ENCODE measurements at regions of chr2 and their contacts with region 1.

Region 1: GRCh38 chr2:10122386-10123280 is at the start of gene RRM2:
- DNase-seq: peak; percentile 98
- ATAC-seq: peak; percentile 81
- H3K4me3 Mint-ChIP-seq: peak within 1 kb of the TSS; percentile 98
- H3K27ac Mint-ChIP-seq: peak within 1 kb of the TSS; percentile 99
- H3K4me1 Mint-ChIP-seq: peaks cover 55% of the 10 kb centered on the region
- H3K27me3 Mint-ChIP-seq: no peaks in the 10 kb centered on the region
- total RNA-seq, gene RRM2: 571 to 604 TPM

Region 2: DNA sequence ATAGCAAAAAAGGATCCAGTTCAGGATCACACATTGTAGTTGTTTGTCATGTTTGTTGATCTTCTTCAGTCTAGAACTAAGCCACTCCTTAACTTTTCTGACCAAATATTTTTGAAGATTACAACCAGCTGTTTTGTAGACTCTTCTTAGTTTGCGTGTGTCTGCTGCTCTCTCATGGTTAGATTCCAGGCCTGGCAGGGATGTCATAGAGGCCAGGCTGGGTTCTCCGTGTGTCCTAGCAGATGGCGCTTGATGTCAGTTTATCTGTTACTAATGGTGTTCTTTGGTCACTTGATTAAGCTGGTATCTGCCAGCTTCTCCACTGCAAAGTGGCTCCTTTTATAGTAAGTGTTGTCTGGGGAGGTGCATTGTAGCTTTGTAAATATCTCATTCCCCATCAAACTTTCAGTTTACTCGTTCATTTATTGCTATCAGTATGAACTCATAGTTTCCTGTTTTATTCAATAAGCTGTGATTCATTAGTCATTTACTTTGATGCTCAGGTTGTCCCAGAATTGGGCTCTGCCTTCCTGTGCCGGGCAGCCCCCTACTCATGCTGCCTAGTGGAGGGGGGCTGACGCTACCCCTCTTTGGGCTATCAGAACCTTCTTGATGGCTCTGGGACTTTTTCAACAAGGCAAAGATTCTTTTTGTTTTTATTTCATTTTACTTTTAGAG is 129.0 kb before region 1 on chr2:
- CTCF ChIA-PET with region 1: no interaction called
- POLR2A ChIA-PET with region 1: no interaction called
- DNase-seq: no peak
- ATAC-seq: no peak
- H3K4me3 Mint-ChIP-seq: no peak overlapping the region
- H3K27ac Mint-ChIP-seq: no peak overlapping the region
- H3K4me1 Mint-ChIP-seq: no peaks in the 10 kb centered on the region
- H3K27me3 Mint-ChIP-seq: no peaks in the 10 kb centered on the region

Region 3: GRCh38 chr2:10097352-10098148 is 25.1 kb before region 1 on chr2:
- CTCF ChIA-PET with region 1: interaction called, 24 read pairs
- POLR2A ChIA-PET with region 1: interaction called, 4 read pairs
- DNase-seq: peak; percentile 44
- ATAC-seq: peak; percentile 91
- H3K4me3 Mint-ChIP-seq: no peak overlapping the region
- H3K27ac Mint-ChIP-seq: no peak overlapping the region
- H3K4me1 Mint-ChIP-seq: peaks cover 4% of the 10 kb centered on the region
- H3K27me3 Mint-ChIP-seq: peaks cover 40% of the 10 kb centered on the region

Region 4: DNA sequence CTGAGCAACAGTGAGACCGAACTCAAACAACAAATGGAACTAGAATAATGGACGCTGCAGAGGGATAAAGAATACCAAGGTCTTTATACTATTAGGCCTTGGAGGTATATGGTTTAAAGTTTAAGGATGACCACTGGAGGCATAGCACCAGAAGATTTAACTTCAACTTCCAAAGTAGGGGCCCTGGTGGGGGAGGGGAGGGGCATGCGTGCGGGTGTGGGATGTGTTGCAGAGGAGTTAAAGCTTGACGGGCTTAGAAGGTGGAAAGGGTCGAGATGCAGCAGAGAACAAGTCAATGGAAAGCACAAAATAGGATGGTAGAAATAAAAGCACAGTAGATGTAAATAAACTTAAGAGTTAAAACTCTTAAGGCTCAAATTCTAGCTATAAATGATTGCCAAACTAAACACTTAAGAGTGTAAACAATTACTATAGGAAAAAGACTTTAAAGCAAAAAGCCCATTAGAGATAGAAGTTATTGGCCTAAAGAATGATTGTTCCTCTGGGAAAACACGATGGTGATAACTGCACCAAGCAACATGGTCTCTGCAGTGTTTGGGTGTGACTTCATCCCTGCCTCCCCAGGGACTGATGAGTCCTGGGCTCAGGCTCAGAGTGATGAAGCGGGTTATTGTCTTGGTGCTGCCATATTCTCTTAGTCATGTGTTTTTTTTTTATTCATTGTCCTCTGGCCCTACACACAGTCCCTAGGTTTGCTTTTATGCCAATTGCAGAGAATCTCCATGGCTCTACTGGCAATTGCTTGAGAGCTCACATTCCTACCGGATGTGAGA is 12.9 kb after region 1 on chr2:
- CTCF ChIA-PET with region 1: interaction called, 12 read pairs
- POLR2A ChIA-PET with region 1: interaction called, 13 read pairs
- DNase-seq: no peak
- ATAC-seq: no peak
- H3K4me3 Mint-ChIP-seq: no peak overlapping the region
- H3K27ac Mint-ChIP-seq: peak overlapping the region; percentile 67
- H3K4me1 Mint-ChIP-seq: peaks cover 42% of the 10 kb centered on the region
- H3K27me3 Mint-ChIP-seq: no peaks in the 10 kb centered on the region

Region 5: GRCh38 chr2:10141736-10142642 is 19.4 kb after region 1 on chr2:
- CTCF ChIA-PET with region 1: interaction called, 12 read pairs
- POLR2A ChIA-PET with region 1: interaction called, 6 read pairs
- DNase-seq: peak; percentile 75
- ATAC-seq: peak; percentile 59
- H3K4me3 Mint-ChIP-seq: peak overlapping the region; percentile 39
- H3K27ac Mint-ChIP-seq: peak overlapping the region; percentile 89
- H3K4me1 Mint-ChIP-seq: peaks cover 40% of the 10 kb centered on the region
- H3K27me3 Mint-ChIP-seq: no peaks in the 10 kb centered on the region

Region 6: DNA sequence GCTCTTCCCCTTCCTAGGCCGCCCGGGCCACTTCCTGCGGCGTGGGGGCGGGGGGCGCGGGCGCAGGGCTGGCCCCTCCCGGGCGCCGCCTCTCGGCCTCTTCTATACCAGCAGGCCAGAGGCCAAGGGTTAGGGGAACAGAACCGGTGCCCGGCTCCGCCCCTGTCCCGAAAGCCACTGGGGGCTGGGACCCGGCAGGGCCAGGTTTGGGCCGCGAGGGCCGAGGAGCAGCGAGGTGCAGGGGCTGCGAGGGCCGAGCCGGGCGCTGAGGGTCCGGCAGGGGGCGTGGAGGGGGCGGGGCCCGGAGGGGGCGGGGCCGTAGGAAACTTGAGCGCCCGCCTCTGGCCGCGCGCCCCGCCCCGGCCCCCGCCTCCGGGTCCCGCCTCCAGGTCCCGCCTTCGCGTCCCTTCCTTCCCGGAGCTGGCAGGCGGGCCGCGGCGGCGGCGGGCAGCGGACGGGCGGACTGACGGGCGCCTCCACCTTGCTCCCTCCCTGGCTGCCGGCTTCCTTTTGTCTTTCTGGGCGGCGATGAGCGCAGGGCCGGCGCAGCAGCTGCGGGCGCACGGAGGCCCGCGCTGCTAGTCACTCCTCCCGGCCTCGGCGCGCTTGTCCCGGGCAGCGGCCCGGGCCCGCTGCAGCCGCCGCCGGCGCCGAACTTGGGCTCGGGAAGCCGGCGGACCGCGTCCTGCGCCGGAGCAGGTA is 180.0 kb after region 1 on chr2 and contains the start of gene HPCAL1:
- CTCF ChIA-PET with region 1: interaction called, 23 read pairs
- POLR2A ChIA-PET with region 1: interaction called, 6 read pairs
- DNase-seq: peak; percentile 87
- ATAC-seq: peak; percentile 72
- H3K4me3 Mint-ChIP-seq: peak within 1 kb of the TSS; percentile 99
- H3K27ac Mint-ChIP-seq: peak within 1 kb of the TSS; percentile 77
- H3K4me1 Mint-ChIP-seq: peaks cover 75% of the 10 kb centered on the region
- H3K27me3 Mint-ChIP-seq: no peaks in the 10 kb centered on the region
- total RNA-seq, gene HPCAL1: 55.8 to 56.6 TPM

Measured in activated CD8-positive, alpha-beta T cell treated with anti-CD3 and anti-CD28 coated beads, Interleukin-2, amount 10 ng/mL, durations not matched to agents 7 days and 5 days (primary cell).